ENCODE measurements at regions of chr1 and their contacts with region 1.

Region 1: DNA sequence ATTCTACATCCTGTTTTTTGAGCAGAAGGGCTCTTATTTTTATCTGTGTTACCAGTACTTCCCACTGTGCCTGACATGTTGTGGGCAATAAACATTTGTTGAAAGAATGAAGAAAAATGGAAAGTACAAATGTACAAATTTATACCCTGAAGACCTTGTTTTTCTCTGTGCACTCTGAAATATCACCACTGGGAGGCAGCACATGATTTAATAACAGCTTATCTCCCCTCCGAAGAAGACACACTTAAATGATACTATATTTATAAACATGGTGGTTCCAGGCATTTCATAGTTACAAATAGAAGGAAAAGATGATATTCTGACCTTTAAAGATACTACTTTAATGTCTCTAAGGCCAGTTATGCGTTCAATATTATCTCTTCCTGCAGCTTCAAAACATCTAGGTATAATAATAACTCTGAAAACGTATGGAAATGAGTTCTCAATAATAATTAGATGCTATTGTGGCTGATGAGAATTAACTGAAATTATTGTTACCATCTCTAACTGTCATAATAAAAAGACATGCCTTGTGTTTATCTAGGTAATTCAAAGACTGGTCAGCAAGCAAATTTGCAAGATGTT is 12.8 kb downstream of the DYNLT5 start:
- DNase-seq: peak; percentile 85

Region 2: GRCh38 chr1:66996018-66996682 is 231.1 kb after region 1 on chr1:
- in situ Hi-C with region 1: loop called (anchors 25 kb)
- DNase-seq: peak; percentile 85

Region 3: GRCh38 chr1:67149179-67149770 is 384.2 kb after region 1 on chr1:
- in situ Hi-C with region 1: loop called (anchors 25 kb)
- DNase-seq: peak; percentile 87

Region 4: DNA sequence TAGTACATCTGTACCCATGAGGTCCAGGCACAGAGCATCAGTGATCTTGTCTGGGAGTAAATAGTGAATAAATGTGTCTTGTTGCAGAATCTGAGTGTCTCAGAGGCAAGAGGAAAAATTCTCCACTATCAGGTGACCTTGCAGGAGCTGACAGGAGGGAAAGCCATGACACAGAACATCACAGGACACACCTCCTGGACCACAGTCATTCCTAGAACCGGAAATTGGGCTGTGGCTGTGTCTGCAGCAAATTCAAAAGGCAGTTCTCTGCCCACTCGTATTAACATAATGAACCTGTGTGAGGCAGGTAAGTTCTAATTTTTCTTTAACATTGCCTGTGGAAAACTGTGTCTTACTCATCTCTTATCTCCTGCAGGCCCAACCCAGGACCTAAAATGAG is 585.7 kb after region 1 on chr1:
- in situ Hi-C with region 1: no loop called
- DNase-seq: no peak

Measured in KBM-7 (cell line).